H1 (cell line): ENCODE measurements at regions of chr17 and their contacts with region 1.

Region 1: DNA sequence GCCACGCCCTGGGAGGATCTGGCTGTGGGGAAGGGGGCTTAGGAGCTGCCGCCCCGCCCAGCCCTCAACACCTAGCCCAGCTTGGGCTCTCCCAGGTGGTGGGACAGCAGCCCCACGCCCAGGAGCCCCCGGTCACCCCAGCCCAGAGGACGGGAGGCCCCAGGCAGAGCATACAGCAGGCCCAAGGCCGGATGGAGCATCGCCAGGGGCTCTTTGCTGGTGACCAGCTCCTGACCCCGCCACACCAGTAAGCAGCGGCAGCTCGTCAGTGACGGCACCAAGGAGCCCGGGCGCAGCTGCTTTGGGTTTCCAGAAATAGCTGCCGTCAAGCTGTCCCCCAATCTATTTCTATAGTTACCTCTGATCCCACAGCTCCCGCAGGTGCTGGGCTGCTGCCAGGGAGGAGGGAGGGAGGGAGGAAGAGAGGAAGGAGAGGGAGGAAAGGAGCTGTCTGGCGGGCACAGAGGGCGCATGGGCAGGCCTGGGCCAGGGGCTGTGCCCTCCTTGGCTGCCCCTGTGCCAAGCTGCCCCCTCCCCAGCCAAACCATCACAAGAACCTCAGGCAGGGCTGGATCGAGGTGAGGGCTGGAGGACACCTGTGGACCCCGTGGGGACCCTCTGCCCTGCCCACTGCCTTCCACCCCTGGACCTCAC is 10.7 kb upstream of the RASD1 start:
- DNase-seq: no peak
- H3K4me3 ChIP-seq: no peak overlapping the region
- H3K27ac ChIP-seq: no peak overlapping the region
- H3K4me1 ChIP-seq: peaks cover 0 to 2% (median 0%) of the 10 kb centered on the region in 4 experiments; a peak in 1 of 7 replicates
- H3K27me3 ChIP-seq: no peaks in the 10 kb centered on the region; a peak in 1 of 7 replicates
- CTCF ChIP-seq: no peak
- EP300 ChIP-seq: no peak
- POLR2A ChIP-seq: no peak
- RAD21 ChIP-seq: no peak

Region 2: GRCh38 chr17:17363638-17364337 is 143.2 kb before region 1 on chr17:
- CTCF ChIA-PET with region 1: no interaction called
- POLR2A ChIA-PET with region 1: no interaction called
- DNase-seq: no peak
- H3K4me3 ChIP-seq: no peak overlapping the region
- H3K27ac ChIP-seq: no peak overlapping the region
- H3K4me1 ChIP-seq: 0 out of 7 replicates have a peak, but pooled peaks cover 0 to 2% (median 0%) of the 10 kb centered on the region in 4 experiments
- H3K27me3 ChIP-seq: no peaks in the 10 kb centered on the region
- CTCF ChIP-seq: no peak
- EP300 ChIP-seq: no peak
- POLR2A ChIP-seq: no peak
- RAD21 ChIP-seq: no peak

Region 3: GRCh38 chr17:17467720-17468119 is 39.2 kb before region 1 on chr17:
- CTCF ChIA-PET with region 1: no interaction called
- POLR2A ChIA-PET with region 1: no interaction called
- DNase-seq: no peak
- H3K4me3 ChIP-seq: no peak overlapping the region
- H3K27ac ChIP-seq: no peak overlapping the region
- H3K4me1 ChIP-seq: no peaks in the 10 kb centered on the region
- H3K27me3 ChIP-seq: no peaks in the 10 kb centered on the region; a peak in 2 of 7 replicates
- CTCF ChIP-seq: no peak
- EP300 ChIP-seq: no peak
- POLR2A ChIP-seq: no peak
- RAD21 ChIP-seq: no peak

Region 4: GRCh38 chr17:17517795-17518413 is 11.0 kb after region 1 on chr17:
- CTCF ChIA-PET with region 1: interaction called, 11 read pairs
- POLR2A ChIA-PET with region 1: no interaction called
- DNase-seq: no peak
- H3K4me3 ChIP-seq: no peak overlapping the region
- H3K27ac ChIP-seq: no peak overlapping the region
- H3K4me1 ChIP-seq: peaks cover 4 to 25% (median 19%) of the 10 kb centered on the region in 4 experiments
- H3K27me3 ChIP-seq: no peaks in the 10 kb centered on the region
- CTCF ChIP-seq: no peak
- EP300 ChIP-seq: no peak
- POLR2A ChIP-seq: no peak
- RAD21 ChIP-seq: no peak

Region 5: DNA sequence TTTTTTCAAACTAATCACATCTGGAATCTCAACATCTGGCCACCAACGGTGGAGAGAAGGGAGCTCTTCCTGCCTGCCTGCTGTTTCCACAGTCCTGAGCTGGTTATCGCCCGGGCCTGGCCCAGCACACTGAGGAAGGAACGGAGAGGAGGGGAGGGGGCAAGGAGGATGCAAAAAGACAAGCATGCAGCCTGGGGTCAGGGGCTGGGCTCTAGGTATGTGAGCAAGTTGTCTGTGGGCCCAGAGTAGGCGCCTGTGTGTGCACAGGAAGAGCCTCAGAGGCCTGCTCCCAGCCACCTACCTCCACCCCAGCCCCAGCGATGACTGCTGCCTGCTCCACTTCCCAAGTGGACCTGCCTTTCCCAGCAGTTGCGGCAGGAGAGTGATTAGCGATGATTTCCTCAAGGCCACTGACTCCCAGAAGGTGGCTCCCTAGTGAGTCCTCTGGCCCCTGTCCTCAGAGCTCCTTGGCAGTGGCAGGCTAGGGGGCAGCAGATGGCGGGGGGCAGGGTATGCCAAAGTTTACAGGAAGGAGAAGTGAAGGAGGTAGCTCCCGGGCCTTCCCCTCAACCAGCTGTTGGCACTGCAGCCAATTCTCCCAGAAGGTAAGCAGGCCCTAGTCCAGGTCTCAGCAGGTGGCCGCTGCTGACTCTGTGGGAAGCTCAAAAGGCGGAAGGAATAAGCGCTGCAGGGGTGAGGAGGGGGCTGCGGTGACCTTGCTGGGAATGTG is 16.2 kb after region 1 on chr17:
- CTCF ChIA-PET with region 1: interaction called, 11 read pairs
- POLR2A ChIA-PET with region 1: no interaction called
- DNase-seq: no peak
- H3K4me3 ChIP-seq: no peak overlapping the region
- H3K27ac ChIP-seq: no peak overlapping the region
- H3K4me1 ChIP-seq: peaks cover 0 to 17% (median 10%) of the 10 kb centered on the region in 4 experiments; a peak in 6 of 7 replicates
- H3K27me3 ChIP-seq: no peaks in the 10 kb centered on the region
- CTCF ChIP-seq: 0 out of 4 replicates have a peak, but pooled peaks of 1 of the 3 experiments have one; percentile 5
- EP300 ChIP-seq: no peak
- POLR2A ChIP-seq: no peak
- RAD21 ChIP-seq: no peak